ENCODE measurements at regions of chr10 and their contacts with region 1.

Region 1: DNA sequence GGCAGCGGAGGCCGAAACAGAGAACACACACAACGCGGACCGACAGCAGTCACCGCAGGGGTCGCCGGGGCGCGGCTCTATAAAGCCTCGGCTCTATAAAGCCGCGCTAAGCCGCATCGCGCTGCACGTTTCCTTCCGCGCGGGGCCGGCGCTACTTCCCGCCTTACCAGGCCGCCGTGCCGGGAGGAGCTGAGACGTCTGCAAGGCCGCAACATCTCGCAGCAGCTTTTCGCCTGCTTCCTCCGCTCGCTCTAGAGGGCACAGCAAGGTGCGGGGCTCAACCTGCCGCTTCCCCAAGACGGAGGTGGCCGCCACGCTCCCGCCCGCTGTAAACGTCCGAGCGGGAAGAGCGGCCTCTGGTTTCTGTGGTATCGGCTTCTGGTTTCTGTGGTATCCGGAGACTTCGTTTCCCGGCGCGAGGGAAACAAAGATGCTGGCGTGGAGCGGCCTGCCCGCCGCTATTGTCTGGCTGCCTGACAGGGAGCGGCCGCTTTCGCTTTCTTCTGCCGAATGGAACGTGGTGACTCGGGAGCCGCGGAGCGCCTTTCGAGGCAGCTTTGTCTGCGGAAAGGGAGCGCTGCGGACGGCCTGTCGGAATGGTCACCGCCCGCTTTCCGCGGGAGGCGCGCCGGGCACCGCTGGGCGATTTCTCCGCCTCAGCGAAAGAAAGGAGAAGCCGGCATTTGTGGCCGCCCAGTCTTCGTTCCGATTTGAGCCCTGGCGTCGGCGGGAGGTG is 91.8 kb downstream of the SPAG6 start:
- DNase-seq: peak; percentile 74

Region 2: GRCh38 chr10:22326145-22326702 is 110.8 kb before region 1 on chr10:
- CTCF ChIA-PET with region 1: no interaction called
- POLR2A ChIA-PET with region 1: interaction called, 10 read pairs
- DNase-seq: no peak

Region 3: DNA sequence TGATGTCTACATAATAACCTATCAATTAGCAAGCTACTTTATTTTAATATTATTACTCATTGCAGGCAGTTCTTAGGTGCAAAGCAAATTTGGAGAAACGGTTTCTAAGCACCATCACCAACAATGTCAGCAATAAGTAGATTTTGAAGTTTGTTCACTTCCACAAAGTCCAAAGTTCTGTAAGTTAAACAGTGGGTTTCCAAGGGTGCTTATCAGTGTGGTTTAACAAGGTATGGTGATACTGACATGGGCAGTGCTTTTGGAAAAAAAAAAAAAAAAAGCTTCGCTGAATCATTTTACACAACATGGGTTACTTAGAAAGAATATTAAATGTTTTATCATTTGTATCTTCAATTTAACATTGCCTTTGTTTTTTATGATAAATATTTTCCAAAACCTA is 10.0 kb after region 1 on chr10:
- CTCF ChIA-PET with region 1: interaction called, 4 read pairs
- POLR2A ChIA-PET with region 1: interaction called, 44 read pairs
- DNase-seq: no peak

Region 4: DNA sequence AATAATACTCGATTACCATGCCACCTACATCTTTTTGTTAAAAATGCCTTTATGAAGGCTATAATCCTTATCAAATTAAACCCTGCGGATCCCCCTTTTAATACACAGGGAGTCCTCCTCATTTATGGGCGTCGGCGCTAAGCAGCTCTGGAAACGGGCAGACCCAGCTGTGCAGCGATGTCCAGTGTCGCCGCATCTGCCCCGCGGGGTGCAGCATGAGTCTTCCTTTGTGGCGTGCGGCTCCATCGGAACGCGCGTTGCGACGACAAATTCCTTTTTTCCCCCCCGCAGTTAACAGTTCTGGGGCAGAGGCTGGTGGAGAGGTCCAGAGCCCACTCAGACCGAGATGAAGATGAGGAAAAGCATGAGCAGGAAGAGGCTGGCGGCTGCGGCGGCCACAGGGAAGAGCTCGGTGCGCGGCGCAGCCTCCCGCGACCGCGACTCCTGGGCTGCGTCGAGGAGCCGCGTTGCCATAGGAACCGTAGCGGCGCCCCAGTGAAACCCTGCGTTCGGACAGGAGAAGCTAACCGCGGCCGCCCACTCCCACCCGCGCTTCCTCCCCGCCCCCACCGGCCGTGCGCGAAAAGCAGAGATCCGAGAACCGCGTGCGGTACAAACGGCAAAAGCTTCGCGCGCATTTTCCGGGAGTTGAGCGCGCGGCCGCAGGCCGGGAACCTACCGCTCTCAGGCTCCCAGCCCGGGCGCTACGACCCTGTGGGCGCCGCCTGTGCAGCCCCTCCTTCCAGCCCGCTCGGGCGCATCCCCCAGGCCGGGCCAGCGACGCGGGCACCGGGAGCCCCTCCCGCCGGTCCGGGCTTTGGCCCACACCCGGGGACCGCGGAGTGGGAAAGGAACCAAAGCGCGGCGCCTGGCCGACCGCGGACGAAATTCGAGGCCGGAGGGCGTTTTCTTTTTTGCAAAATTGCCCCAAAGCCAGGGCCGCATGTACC is 38.9 kb after region 1 on chr10:
- CTCF ChIA-PET with region 1: interaction called, 3 read pairs
- POLR2A ChIA-PET with region 1: interaction called, 15 read pairs
- DNase-seq: no peak

Region 5: GRCh38 chr10:22503315-22504076 is 66.4 kb after region 1 on chr10:
- CTCF ChIA-PET with region 1: interaction called, 4 read pairs
- POLR2A ChIA-PET with region 1: interaction called, 16 read pairs
- DNase-seq: peak; percentile 74

Region 6: GRCh38 chr10:22554461-22555182 is 117.6 kb after region 1 on chr10:
- CTCF ChIA-PET with region 1: no interaction called
- POLR2A ChIA-PET with region 1: interaction called, 22 read pairs
- DNase-seq: peak; percentile 63

Region 7: GRCh38 chr10:22874189-22874854 is 437.3 kb after region 1 on chr10:
- CTCF ChIA-PET with region 1: no interaction called
- POLR2A ChIA-PET with region 1: no interaction called
- DNase-seq: no peak